MCF 10A (cell line): ENCODE measurements at regions of chr5 and their contacts with region 1.

Region 1: DNA sequence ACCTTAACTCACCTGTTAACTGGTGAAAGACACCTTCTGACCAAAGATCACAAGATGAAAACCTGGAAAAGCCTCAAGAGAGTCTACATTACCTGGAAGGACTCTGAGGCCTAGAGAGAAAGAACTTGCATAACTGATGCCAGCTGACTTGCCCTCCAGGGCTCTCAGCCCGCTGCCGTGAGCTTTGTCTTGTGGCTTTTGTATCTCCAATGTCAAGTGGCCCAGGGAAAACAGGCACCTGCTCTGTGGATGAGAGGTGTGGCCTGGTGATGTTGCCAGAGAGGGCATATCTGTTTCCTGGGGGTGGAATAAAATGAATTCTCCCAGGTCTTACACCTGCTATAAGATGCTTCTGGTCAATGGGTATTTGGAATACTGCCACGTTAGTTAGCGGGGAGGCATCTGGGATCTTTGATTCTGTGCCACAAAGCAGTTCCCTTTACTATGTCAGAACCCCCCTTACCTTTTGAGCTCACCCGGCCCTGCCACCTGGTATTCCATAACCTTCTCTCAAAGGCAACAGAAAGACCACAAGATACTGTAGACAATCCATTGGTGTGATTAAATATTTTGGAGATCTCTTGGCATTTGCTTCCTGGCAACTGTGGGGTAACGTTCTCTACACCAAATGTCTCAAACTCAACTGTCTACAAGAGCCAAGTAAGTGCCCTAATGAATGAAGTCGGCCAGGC is 54.9 kb upstream of the N4BP3 start:
- DNase-seq: no peak
- H3K4me3 Mint-ChIP-seq: no peak overlapping the region
- H3K27ac Mint-ChIP-seq: no peak overlapping the region
- H3K4me1 Mint-ChIP-seq: no peaks in the 10 kb centered on the region
- H3K27me3 Mint-ChIP-seq: peaks cover 19% of the 10 kb centered on the region
- CTCF ChIP-seq: no peak

Region 2: GRCh38 chr5:177399997-177400868 is 658.2 kb before region 1 on chr5 and contains the start of gene PFN3:
- CTCF ChIA-PET with region 1: no interaction called
- POLR2A ChIA-PET with region 1: no interaction called
- intact Hi-C with region 1: no loop called
- DNase-seq: no peak
- H3K4me3 Mint-ChIP-seq: no peak within 1 kb of the TSS
- H3K27ac Mint-ChIP-seq: no peak within 1 kb of the TSS
- H3K4me1 Mint-ChIP-seq: peaks cover 23% of the 10 kb centered on the region
- H3K27me3 Mint-ChIP-seq: no peaks in the 10 kb centered on the region
- CTCF ChIP-seq: no peak
- total RNA-seq, gene PFN3: not detected in 2 replicates

Region 3: DNA sequence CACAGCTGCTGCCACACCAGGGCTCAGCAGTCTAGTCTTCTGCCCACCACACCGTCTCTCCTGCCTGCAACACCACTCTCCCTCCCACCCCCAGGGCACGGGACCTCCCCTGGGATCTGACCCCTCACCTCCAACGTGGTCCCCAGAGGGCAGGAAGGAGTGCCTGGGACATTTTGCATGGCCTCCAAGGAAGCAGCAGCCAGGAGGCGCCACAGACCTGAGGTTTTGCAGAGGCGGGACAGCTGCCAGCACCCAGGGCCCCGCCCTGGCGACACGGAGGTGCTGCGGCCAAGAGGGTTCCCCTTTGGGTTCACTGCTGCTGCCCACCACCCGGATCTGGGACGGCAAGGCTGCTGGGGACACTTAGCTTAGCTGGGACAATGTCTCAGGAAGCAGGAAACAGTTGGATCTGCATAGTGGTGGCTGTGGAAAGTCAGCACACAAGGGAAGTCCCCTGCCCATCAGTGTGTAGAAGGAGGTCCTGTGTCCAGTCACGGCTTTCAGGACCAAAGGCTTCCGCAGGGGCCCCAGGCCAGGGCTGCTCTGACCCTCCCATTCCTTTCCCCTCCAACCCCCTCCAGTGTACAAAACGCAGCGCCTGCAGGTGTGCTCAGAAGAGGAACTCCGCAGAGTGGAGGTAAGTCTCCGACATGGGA is 76.3 kb before region 1 on chr5:
- CTCF ChIA-PET with region 1: interaction called, 10 read pairs
- POLR2A ChIA-PET with region 1: no interaction called
- intact Hi-C with region 1: no loop called
- DNase-seq: peak; percentile 58
- H3K4me3 Mint-ChIP-seq: no peak overlapping the region
- H3K27ac Mint-ChIP-seq: no peak overlapping the region
- H3K4me1 Mint-ChIP-seq: no peaks in the 10 kb centered on the region
- H3K27me3 Mint-ChIP-seq: no peaks in the 10 kb centered on the region
- CTCF ChIP-seq: peak; percentile 13

Region 4: DNA sequence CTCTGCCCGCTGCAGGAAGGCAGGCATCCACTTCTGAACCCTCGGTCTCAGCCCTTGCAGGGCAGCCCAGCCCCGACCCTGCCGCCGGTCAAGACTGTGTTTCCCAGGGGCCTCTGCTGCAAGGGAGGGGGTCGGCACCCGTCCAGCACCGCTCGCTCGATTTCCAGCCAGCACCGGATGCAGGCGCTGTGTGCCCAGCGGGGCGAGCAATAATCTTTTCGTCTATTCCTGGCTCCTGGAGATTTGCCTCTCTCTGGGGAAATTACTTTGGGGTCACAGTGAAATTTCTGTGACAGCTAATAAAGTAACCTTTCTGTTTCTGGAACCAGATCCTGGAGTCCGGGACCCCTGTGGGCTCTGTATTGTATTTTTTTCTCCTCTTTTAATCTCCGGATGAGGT is 376.4 kb after region 1 on chr5:
- CTCF ChIA-PET with region 1: no interaction called
- POLR2A ChIA-PET with region 1: no interaction called
- intact Hi-C with region 1: no loop called
- DNase-seq: no peak
- H3K4me3 Mint-ChIP-seq: no peak overlapping the region
- H3K27ac Mint-ChIP-seq: no peak overlapping the region
- H3K4me1 Mint-ChIP-seq: peaks cover 2% of the 10 kb centered on the region
- H3K27me3 Mint-ChIP-seq: peaks cover 39% of the 10 kb centered on the region
- CTCF ChIP-seq: no peak